ENCODE measurements at regions of chr3 and their contacts with region 1.

Region 1: DNA sequence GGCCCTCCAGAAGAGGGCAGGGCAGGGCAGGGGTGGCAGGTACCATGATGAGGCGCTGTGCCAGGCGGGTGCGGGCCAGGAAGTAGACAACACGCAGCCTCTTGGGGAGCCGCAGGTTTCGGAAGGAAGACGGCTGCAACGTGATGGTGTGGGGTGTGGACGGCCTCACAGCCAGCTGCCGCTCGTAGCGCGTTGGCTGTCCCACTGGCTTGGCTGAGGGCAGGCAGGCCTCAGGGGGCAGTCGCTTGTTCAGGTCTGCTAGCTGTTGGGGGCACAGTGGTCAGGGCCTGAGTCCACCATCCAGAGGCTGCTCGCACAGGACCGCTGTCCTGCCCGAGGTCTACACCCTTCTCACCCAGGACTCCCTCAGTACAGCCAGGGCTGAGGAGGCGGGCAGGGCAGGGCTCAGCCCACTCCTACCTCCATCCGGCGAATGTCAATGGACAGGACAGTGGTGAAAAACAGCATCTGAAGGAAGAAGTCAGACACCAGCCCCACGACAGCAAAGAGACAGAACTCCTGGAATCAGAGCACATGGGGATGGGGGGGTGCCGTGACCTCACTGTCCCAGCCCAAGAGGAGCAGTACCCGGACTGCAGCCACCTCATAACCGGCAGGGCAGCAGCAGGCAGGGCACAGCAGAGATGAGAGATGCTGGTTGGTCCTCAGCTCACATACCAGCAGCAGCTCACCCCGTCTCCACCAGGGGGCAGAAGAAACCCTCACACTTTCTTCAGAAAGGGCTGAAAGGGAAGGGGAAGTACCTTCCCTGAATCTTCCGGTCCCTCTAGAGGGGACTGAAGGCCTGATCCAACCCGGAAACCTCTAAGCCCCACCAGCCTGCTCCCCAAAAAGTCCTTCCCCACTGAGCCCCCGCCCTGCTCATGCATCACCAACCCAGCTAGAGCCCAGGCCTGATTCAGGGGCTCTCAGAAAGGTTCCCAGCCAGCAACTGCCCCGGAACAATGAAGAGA is 40.0 kb downstream of the PTPN23 start:
- DNase-seq: peak; percentile 90
- H3K4me3 ChIP-seq: no peak overlapping the region; a peak in 1 of 4 replicates
- H3K27ac ChIP-seq: peak overlapping the region; percentile 62 to 90
- H3K4me1 ChIP-seq: peaks cover 0 to 24% of the 10 kb centered on the region in 2 experiments; a peak in 1 of 4 replicates
- H3K27me3 ChIP-seq: no peaks in the 10 kb centered on the region
- CTCF ChIP-seq: peak; percentile 89
- EP300 ChIP-seq: no peak
- RAD21 ChIP-seq: peak; percentile 82

Region 2: GRCh38 chr3:47380601-47381316 is 40.0 kb before region 1 on chr3 and contains the start of gene PTPN23:
- CTCF ChIA-PET with region 1: interaction called, 12 read pairs
- POLR2A ChIA-PET with region 1: interaction called, 4 read pairs
- DNase-seq: peak; percentile 97
- H3K4me3 ChIP-seq: peak within 1 kb of the TSS; percentile 77 to 96
- H3K27ac ChIP-seq: peak within 1 kb of the TSS; percentile 87 to 98
- H3K4me1 ChIP-seq: peaks cover 0 to 15% of the 10 kb centered on the region in 2 experiments; a peak in 1 of 4 replicates
- H3K27me3 ChIP-seq: no peaks in the 10 kb centered on the region
- CTCF ChIP-seq: no peak
- EP300 ChIP-seq: no peak
- RAD21 ChIP-seq: no peak
- polyA plus RNA-seq, gene PTPN23: 4.4 and 10.9 TPM in 2 replicates

Region 3: DNA sequence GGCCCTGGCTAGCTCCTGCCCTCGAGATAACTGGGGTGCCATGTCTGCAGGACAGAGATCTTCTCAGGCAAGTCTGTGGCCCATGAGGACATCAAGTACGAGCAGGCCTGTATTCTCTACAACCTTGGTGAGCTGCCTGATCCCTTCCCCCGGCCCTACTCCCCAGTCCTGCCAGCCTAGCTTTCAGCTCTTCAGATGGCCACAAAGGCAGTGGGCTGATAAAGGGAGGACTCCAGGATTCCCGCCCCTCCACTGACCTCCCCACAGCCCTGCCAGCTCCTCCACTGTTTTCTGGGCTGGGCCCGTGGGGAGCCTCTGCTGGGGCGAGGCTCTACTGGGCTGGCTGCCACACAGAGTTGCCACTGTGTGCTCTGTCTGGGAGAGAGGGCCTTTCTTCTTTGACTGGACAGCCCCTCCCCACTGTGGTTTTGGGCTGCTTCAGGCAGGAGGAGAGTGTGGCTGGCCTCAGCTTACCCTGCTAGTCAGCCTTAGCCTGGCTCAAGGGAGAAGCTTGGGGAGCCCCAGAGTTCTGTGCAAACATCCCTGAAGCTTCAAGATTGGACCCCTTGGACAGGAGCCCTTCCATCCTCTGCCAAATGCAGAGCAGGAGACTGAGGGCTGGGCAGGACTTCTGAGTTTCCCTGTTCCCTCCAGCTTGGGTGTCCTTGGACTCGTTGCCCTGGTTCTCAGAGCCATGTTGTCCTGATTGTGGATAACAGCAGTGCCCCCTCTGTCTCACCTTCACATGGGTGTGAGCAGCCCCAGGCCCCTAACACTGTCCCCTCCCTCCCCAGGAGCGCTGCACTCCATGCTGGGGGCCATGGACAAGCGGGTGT is 15.6 kb before region 1 on chr3:
- CTCF ChIA-PET with region 1: interaction called, 48 read pairs
- POLR2A ChIA-PET with region 1: interaction called, 3 read pairs
- DNase-seq: peak; percentile 24
- H3K4me3 ChIP-seq: no peak overlapping the region
- H3K27ac ChIP-seq: no peak overlapping the region
- H3K4me1 ChIP-seq: peaks cover 0 to 5% of the 10 kb centered on the region in 2 experiments; a peak in 1 of 4 replicates
- H3K27me3 ChIP-seq: no peaks in the 10 kb centered on the region
- CTCF ChIP-seq: no peak
- EP300 ChIP-seq: no peak
- RAD21 ChIP-seq: no peak

Region 4: GRCh38 chr3:47475570-47476329 is 55.0 kb after region 1 on chr3 and contains the start of gene SCAP:
- CTCF ChIA-PET with region 1: interaction called, 64 read pairs
- POLR2A ChIA-PET with region 1: interaction called, 12 read pairs
- DNase-seq: peak; percentile 98
- H3K4me3 ChIP-seq: peak within 1 kb of the TSS; percentile 74 to 98
- H3K27ac ChIP-seq: peak within 1 kb of the TSS; percentile 60 to 66
- H3K4me1 ChIP-seq: peaks cover 0 to 5% of the 10 kb centered on the region in 2 experiments; a peak in 1 of 4 replicates
- H3K27me3 ChIP-seq: no peaks in the 10 kb centered on the region
- CTCF ChIP-seq: peak; percentile 79
- EP300 ChIP-seq: no peak; a peak in 1 of 4 replicates
- RAD21 ChIP-seq: peak; percentile 57
- polyA plus RNA-seq, gene SCAP: 22.2 and 28.0 TPM in 2 replicates

Region 5: GRCh38 chr3:47513125-47513929 is 92.5 kb after region 1 on chr3 and contains the start of gene ELP6:
- CTCF ChIA-PET with region 1: interaction called, 14 read pairs
- POLR2A ChIA-PET with region 1: no interaction called
- DNase-seq: peak; percentile 96
- H3K4me3 ChIP-seq: peak within 1 kb of the TSS; percentile 55 to 82
- H3K27ac ChIP-seq: peak within 1 kb of the TSS; percentile 95 to 99
- H3K4me1 ChIP-seq: peaks cover 0 to 6% of the 10 kb centered on the region in 2 experiments; a peak in 1 of 4 replicates
- H3K27me3 ChIP-seq: no peaks in the 10 kb centered on the region
- CTCF ChIP-seq: peak; percentile 50
- EP300 ChIP-seq: no peak
- RAD21 ChIP-seq: peak; percentile 54
- polyA plus RNA-seq, gene ELP6: 79.8 and 88.3 TPM in 2 replicates